Sciatic nerve (tissue), 2 donors: ENCODE measurements at regions of chr6 and their contacts with region 1.

Region 1: DNA sequence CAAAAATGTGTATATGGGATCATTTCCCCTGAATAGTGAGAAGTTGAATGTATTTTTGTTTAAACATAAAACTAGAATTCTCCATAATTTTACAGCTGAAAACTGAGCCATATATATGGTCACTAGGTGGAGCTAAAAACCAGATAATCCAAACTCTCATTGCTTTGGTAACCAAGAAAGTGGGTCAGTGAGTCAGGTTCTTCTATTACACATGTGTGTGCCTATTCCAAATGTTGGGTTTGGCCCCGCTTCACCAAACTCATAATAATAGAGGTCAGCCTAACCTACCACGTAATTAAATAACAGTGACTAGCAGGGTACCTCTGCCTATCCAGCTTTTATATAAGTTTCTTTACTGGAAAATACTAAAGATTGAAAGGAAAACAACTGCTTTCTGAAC is 19.3 kb upstream of the RNGTT start:
- DNase-seq: no peak
- ATAC-seq: peak; percentile 97

Region 2: GRCh38 chr6:89110284-89110683 is 127.6 kb after region 1 on chr6:
- intact Hi-C with region 1: no loop called
- DNase-seq: no peak
- ATAC-seq: no peak

Region 3: DNA sequence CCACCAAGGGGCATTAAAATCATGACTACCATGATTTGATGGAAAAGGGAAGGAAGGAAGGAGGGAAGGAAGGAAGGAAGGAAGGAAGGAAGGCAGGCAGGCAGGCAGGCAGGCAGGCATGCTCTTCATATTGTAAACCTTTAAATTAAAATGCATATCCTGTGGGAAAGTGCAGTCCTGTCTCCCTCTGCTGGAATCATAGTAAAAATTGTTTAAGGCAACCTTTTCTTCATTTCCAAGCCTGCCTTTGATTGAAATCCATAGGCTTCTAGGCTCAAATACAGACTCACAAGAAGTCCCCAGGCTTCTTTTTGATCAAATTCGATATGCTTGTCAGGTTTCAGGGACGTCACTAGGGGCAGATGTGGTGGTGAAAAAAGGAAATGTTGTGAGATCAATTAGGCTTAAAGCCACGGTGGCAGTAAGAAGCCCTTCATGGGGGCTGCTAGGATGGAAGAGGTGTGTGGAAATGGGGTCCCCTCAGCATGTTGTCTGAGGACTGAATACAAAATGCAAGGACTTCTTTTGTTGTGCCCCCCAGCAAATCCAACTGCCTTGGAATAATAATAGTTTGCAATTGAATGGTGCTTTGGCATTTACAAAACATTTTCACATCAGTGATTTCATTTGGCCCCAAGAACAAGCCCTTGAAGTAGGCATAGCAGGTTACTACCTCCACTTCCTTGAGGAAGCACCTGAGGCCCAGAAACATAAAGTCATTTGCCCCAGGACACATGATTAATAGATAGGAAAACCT is 260.0 kb after region 1 on chr6:
- intact Hi-C with region 1: loop called (anchors 10 kb)
- DNase-seq: no peak
- ATAC-seq: no peak

Region 4: GRCh38 chr6:89371849-89372505 is 389.3 kb after region 1 on chr6:
- intact Hi-C with region 1: loop called (anchors 10 kb)
- DNase-seq: peak; percentile 84
- ATAC-seq: peak; percentile 89